ENCODE measurements at regions of chr14 and their contacts with region 1.

Region 1: DNA sequence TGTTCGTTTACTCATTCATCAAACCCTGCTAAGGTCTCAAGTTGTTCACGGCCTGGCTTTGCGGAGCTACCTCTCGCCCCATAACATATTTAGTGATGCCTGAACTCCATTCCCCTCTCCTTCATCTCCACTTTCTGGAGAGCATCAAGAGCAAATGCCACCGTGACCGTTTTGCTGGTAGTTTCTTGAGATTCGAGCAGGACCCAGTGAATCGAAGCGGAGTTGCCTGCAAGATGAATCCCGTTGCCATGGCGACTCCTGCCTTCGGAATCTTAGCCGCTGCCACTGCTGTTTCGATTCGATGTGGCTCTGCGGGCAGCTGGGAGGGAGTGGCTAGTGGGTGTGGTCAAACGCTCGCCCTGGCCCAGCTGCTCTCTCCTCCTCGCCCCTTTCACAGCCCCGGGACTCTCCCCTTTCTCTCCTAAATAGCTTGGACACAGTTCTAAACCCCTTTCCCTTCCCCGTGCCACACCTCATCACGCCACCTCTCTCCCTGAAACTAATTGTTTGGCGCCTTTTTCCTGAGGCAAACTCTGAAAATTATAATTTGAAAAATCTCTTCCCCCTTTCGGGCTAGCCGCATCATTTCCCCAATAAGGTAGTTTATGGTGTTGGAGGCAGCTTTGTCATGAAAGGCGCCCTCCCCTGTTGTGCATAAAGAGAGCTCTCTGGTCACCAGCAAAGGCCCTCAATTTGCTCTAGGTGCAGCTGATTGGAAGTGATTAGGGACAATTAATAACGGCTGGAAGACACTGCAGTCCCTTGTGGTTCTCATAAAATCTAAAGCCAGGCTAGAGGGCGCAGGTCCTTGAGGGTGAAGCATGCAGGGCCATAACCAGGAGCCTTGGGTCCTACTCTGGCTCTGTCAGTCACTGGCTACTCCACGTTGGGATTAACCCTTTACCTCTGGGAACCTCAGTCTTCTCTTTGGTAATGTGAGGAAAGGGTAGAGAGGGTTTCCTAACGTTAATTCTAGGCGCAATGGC is 1.6 kb downstream of the DAAM1 start:
- DNase-seq: peak; percentile 77
- H3K4me3 Mint-ChIP-seq: peak overlapping the region; percentile 89
- H3K27ac Mint-ChIP-seq: peak overlapping the region; percentile 76
- H3K4me1 Mint-ChIP-seq: peaks cover 9% of the 10 kb centered on the region
- H3K27me3 Mint-ChIP-seq: no peaks in the 10 kb centered on the region
- CTCF ChIP-seq: no peak

Region 2: DNA sequence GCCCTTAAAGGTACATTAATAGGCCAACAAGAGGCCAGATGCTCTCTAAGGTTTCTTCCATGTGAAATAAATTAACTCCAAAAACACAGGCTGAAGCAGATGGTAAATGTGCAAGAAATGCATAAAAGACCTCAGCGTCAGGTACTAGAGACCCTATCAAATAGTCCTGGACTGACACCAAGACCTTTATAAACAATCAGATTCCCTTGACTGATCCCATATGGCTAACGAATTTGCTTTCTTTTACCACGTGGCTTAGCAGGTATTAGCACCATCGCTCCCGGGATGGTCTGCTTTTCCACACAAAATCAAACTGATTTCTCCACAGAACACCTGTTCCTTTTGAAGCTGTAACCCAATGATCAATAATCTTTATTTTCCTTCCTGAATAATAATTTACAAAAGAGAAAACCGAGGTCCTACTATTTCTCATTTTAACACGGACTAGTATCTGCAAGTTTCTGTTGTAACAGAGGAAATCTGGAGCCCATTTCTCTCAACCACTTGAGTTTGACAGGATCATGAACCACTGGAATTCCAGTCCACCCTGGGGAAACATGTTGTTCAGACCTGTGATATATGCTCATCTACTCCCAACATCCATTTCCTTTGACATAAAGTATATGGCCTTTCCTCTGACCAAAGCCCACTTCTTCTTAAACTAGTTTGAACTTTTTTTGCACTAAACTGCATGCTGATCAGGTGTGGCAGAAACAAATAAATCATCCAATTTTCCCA is 49.8 kb before region 1 on chr14:
- CTCF ChIA-PET with region 1: no interaction called
- POLR2A ChIA-PET with region 1: no interaction called
- intact Hi-C with region 1: no loop called
- DNase-seq: no peak
- H3K4me3 Mint-ChIP-seq: no peak overlapping the region
- H3K27ac Mint-ChIP-seq: no peak overlapping the region
- H3K4me1 Mint-ChIP-seq: no peaks in the 10 kb centered on the region
- H3K27me3 Mint-ChIP-seq: peaks cover 14% of the 10 kb centered on the region
- CTCF ChIP-seq: no peak

Region 3: DNA sequence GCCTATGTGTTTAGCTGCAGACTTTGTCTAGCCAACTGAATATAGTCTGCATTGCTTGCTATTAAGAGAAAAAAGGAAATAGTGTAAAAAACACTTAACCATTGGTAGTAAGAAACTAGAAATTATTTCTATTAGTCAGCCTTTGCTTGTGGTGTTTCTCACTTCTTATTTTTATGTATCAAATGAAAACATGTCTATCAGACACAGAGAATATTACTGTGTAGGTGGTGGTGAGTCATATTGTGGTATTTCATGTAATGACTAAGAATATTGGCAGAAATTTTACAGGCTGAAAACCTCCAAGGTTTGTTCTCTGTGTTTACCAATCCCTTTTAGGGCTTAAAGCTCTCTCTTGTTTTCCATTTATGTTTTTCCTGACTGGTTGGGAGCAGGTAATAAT is 85.6 kb after region 1 on chr14:
- CTCF ChIA-PET with region 1: interaction called, 3 read pairs
- POLR2A ChIA-PET with region 1: interaction called, 81 read pairs
- intact Hi-C with region 1: no loop called
- DNase-seq: peak; percentile 87
- H3K4me3 Mint-ChIP-seq: peak overlapping the region; percentile 33
- H3K27ac Mint-ChIP-seq: peak overlapping the region; percentile 81
- H3K4me1 Mint-ChIP-seq: peaks cover 39% of the 10 kb centered on the region
- H3K27me3 Mint-ChIP-seq: no peaks in the 10 kb centered on the region
- CTCF ChIP-seq: no peak

Region 4: DNA sequence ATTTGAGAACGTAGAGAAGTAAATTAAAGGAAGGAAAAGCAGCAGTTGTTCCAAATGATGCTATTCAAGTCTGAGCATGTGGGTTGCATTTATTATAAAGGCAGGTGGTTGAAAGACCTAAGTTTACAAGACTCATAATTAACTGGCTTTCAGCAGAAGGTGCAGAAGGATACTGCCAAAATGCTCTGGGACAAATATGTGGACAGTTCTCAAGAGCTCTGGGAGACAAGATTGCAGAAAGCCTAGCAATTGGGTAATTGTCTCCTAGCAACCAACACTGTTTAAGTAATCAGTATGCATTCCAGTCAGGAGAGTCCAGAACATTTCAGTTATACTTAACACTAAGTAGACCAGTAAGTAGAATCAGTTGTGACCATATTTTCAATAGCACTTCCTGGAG is 143.6 kb after region 1 on chr14:
- CTCF ChIA-PET with region 1: no interaction called
- POLR2A ChIA-PET with region 1: interaction called, 27 read pairs
- intact Hi-C with region 1: no loop called
- DNase-seq: peak; percentile 88
- H3K4me3 Mint-ChIP-seq: no peak overlapping the region
- H3K27ac Mint-ChIP-seq: peak overlapping the region; percentile 82
- H3K4me1 Mint-ChIP-seq: peaks cover 46% of the 10 kb centered on the region
- H3K27me3 Mint-ChIP-seq: no peaks in the 10 kb centered on the region
- CTCF ChIP-seq: no peak

Region 5: GRCh38 chr14:59354666-59355065 is 164.6 kb after region 1 on chr14:
- CTCF ChIA-PET with region 1: no interaction called
- POLR2A ChIA-PET with region 1: interaction called, 26 read pairs
- intact Hi-C with region 1: no loop called
- DNase-seq: peak; percentile 85
- H3K4me3 Mint-ChIP-seq: no peak overlapping the region
- H3K27ac Mint-ChIP-seq: peak overlapping the region; percentile 46
- H3K4me1 Mint-ChIP-seq: peaks cover 43% of the 10 kb centered on the region
- H3K27me3 Mint-ChIP-seq: no peaks in the 10 kb centered on the region
- CTCF ChIP-seq: no peak

Region 6: GRCh38 chr14:59407246-59408010 is 217.3 kb after region 1 on chr14:
- CTCF ChIA-PET with region 1: no interaction called
- POLR2A ChIA-PET with region 1: interaction called, 11 read pairs
- intact Hi-C with region 1: no loop called
- DNase-seq: peak; percentile 68
- H3K4me3 Mint-ChIP-seq: peak overlapping the region; percentile 34
- H3K27ac Mint-ChIP-seq: peak overlapping the region; percentile 81
- H3K4me1 Mint-ChIP-seq: peaks cover 10% of the 10 kb centered on the region
- H3K27me3 Mint-ChIP-seq: no peaks in the 10 kb centered on the region
- CTCF ChIP-seq: no peak

Region 7: DNA sequence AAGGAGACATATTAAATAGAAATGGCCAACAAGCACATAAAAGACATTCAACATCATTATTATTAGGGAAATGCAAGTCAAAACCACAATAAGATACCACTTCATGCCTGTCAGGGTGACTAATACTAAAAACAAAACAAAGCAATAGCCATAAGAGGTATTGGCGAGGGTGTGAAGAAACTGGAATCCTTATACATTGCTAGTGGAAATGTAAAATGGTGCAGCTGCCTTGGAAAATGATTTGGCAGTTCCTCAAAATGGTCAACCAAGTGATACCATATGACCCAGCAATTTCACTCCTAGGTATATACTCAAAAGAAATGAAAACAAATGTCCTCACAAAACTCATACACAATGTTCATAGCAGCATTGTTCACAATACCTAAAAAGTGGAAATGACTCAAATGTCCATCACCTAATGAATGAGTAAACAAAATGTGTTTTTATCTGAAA is 248.1 kb after region 1 on chr14:
- CTCF ChIA-PET with region 1: no interaction called
- POLR2A ChIA-PET with region 1: interaction called, 7 read pairs
- intact Hi-C with region 1: loop called (anchors 2 kb)
- DNase-seq: peak; percentile 76
- H3K4me3 Mint-ChIP-seq: no peak overlapping the region
- H3K27ac Mint-ChIP-seq: peak overlapping the region; percentile 57
- H3K4me1 Mint-ChIP-seq: peaks cover 15% of the 10 kb centered on the region
- H3K27me3 Mint-ChIP-seq: no peaks in the 10 kb centered on the region
- CTCF ChIP-seq: no peak